AG04450 (cell line): ENCODE measurements at regions of chr17 and their contacts with region 1.

Region 1: DNA sequence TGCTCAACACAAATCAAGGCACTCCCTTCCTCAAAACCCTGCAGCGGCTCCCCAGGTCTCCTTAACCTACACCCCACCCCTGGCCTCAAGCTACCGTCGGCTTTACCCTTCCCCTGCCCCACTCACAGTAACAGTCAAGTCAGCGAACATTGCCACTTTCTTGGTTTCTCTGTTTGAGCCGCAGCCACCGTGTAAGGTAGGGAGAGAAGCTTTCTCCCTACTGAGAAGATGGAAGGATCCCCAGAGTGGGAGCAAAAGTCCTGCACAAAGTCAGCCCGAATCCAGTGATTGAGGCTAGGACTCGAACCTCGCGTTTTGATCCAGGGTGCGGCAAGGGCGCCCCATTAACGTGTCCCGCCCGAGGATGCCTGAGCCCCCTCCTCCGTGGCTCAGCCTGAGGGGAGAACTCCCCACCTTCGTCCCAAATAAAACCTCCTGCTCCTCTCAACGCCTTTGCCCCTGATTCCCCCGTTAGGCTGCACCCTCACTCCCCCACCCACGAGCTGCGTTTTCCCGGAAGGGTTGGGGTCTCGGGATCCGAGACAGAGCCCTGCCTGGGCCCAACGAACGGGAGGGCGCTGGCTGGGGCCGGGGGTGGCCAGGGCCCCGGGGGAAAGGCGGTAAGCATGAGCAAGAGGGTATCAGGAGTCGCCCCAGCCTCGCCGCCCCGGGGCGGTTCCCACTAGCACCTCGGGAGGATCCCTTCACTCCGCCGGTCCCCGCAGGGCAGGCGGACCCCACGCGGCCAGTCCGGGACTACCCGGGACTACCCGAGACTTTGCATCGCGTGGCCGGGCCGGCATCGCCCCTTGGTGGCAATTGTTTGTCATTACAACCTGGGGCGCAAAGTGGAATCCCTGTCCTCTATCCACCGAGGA is 9.9 kb upstream of the NAGS start:
- DNase-seq: no peak
- H3K4me3 ChIP-seq: peak overlapping the region; percentile 46
- H3K27ac ChIP-seq: no peak overlapping the region
- H3K27me3 ChIP-seq: peaks cover 13% of the 10 kb centered on the region
- CTCF ChIP-seq: peak; percentile 87

Region 2: DNA sequence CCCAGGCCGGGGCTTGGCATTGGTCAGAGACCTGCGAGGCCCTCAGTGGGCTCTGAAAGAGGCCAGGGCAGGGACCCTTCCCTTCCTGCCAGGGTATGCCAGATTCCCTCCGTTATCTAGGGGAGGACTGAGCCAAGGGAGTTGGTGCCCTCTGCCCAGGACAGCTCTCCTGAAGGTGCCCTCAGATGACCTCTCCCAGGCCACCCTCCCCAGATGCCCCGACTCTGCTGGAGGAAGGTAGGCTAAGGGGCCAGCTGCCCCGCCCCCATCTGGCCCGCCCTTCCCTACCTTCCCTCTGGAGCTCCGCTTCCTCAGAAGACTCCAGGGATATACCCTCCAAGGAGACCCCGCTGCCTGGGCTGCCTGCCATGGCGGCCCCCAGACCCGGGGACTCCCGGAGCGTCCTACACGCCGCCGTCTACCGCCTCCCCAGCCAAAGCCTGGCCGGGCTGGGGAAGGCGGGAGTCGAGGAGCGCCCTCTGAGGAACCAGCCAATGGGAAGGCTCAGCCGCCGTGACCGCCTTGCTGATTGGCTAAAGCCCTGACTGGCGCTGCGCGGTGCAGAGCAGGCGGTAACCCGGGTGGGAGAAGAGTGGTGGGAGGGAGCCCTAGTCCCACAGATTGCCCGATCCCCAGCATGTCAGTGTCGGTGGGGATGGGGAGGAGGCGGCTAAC is 94.2 kb before region 1 on chr17:
- CTCF ChIA-PET with region 1: no interaction called
- POLR2A ChIA-PET with region 1: no interaction called
- DNase-seq: peak; percentile 29
- H3K4me3 ChIP-seq: peak overlapping the region; percentile 57
- H3K27ac ChIP-seq: no peak overlapping the region
- H3K27me3 ChIP-seq: peaks cover 25% of the 10 kb centered on the region
- CTCF ChIP-seq: no peak

Region 3: DNA sequence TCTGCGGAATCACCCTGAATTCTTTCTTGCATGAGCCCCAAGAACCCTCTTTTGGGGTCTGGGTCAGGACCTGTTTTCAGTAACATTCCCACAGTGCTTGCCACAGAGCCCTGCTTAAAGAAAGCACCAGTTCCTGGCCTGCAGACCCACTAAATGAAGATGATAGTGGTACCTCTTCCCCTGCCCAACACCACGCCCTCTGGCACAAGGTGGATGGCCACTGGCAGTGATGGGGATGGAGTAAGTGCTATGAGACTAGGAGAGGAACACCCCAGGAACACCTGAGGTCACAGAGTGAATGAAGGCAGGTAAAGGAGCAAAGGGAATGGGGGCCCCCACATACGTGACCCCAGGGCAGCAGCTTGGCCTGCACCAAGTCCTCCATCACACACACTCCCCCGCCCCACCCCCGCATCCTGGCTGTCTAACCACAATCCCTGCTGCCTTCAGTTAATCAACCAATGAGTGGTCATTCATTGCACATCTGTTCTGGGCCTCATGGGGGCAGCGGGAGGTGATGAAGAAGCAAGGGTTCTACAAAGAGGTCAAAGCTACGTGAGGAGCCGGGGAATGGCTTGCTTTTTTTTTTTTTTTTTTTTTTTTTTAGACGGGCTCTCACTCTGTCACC is 48.3 kb before region 1 on chr17:
- CTCF ChIA-PET with region 1: interaction called, 123 read pairs
- POLR2A ChIA-PET with region 1: no interaction called
- DNase-seq: no peak
- H3K4me3 ChIP-seq: no peak overlapping the region
- H3K27ac ChIP-seq: no peak overlapping the region
- H3K27me3 ChIP-seq: peaks cover 20% of the 10 kb centered on the region
- CTCF ChIP-seq: no peak